ENCODE measurements at regions of chr1 and their contacts with region 1.

Region 1: DNA sequence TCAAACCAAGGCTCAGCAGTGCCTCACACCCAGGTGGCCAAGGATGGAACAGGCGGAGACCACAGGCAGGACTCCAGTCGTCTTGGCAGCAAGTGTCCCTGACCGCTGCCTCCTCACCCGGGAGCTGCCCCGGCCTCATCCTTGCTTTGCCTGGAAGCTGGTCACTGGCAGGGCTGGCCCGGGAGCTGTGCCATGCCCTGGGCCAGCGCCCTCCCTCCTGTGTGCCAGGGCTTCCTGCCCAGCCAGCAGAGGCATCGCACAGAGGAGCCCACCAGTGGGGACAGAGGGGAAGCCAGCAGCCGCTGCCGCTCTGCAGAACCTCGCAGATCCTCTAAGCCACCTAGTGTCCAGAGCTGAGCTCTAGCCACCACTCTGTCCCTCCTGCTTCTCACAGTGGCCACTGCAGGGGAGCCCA is 7.8 kb downstream of the CASZ1 start:
- DNase-seq: peak; percentile 81
- ATAC-seq: peak; percentile 89

Region 2: DNA sequence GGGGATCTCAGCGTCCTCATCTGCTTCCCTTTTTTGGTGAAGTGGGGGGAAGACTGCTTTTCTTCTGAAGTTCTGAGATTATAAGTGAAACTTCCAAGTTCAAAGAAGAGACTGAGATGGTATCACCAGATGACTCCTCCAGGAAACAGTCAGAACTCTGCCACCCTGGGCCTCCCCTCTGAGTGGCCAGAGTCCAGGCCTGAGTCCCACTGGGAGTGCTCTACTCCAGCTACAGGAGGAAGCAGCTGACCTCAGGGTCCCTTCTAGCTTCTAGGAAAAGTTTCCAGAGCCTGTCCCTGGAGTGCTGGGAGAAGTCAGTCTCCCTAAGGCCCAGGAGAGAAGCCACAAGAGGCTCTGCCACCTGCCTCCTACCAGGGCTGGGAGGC is 96.9 kb before region 1 on chr1:
- intact Hi-C with region 1: loop called (anchors 2 kb)
- DNase-seq: no peak
- ATAC-seq: no peak

Measured in Right ventricle myocardium superior (tissue), 1 donor.